ENCODE measurements at regions of chr2 and their contacts with region 1.

Region 1: DNA sequence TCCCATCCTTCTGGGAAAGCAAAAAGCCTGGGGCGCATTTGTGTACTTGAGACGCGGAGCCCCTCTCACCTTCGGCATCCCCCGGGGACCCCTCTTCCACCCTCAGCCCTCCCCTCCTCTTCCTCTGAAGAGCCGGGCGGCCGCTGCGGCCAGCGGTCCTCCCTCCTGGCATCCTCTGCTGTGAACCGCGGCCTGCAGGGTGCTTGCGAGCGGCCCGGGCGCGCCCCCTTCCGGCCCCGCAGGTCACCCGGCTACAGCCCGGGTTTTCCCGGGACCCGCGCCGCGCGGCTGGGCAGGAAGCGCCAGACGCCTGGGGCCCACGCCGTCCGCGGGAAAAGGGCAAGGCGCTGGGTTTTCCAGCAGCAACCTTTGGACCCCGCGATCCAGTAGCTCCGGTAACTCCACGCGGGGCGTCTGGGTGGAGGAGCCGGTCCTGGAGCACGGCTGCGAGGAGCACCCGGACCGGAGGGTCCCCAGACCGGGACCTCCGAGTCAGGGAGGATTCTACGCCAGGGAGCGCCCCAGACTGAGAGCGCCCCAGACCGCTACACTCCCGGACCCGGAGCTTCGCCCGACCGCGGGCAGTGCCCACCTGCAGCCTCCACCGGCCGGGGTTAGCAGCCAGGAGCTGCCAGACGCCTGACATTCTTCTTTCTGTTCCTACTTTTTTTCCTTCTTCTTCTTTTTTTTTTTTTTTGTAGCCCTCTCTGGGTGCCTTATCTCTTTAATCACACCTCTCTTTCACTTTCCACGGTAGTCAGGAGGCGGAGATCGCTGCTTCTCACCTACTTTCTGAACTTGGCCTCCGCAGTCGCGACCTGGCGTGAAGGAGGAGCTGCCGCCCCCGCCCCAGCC is at the start of gene IL18R1:
- DNase-seq: peak; percentile 81 to 88
- ATAC-seq: peak; percentile 96 to 100 (median 99)
- H3K4me3 ChIP-seq: peak within 1 kb of the TSS; percentile 84
- H3K27ac ChIP-seq: peak within 1 kb of the TSS; percentile 32
- H3K4me1 ChIP-seq: no peaks in the 10 kb centered on the region
- H3K27me3 ChIP-seq: no peaks in the 10 kb centered on the region
- CTCF ChIP-seq: peak; percentile 84
- total RNA-seq, gene IL18R1: 0.80 to 2.1 (median 0.97) TPM

Region 2: DNA sequence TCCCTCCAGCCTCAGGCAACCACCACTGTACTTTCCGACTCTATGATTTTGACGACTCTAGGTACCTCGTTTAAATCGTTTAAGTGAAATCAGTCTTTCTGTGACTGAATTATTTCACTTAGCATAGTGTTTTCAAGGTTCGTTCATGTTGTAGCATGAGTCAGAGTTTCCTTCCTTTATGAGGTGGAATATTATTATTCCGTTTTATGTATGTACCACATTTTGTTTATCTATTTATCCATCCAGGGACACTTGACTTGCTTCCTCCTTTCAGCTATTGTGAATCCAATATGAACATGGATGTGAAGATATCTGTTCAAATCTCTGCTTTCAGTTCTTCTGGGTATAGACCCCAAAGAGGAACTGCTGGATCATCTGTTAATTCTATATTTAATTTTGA is 344.9 kb before region 1 on chr2:
- intact Hi-C with region 1: loop called in 1 of 2 experiments (anchors 10 kb)
- DNase-seq: no peak
- ATAC-seq: no peak
- H3K4me3 ChIP-seq: no peak overlapping the region
- H3K27ac ChIP-seq: no peak overlapping the region
- H3K4me1 ChIP-seq: no peaks in the 10 kb centered on the region
- H3K27me3 ChIP-seq: no peaks in the 10 kb centered on the region
- CTCF ChIP-seq: no peak

Region 3: DNA sequence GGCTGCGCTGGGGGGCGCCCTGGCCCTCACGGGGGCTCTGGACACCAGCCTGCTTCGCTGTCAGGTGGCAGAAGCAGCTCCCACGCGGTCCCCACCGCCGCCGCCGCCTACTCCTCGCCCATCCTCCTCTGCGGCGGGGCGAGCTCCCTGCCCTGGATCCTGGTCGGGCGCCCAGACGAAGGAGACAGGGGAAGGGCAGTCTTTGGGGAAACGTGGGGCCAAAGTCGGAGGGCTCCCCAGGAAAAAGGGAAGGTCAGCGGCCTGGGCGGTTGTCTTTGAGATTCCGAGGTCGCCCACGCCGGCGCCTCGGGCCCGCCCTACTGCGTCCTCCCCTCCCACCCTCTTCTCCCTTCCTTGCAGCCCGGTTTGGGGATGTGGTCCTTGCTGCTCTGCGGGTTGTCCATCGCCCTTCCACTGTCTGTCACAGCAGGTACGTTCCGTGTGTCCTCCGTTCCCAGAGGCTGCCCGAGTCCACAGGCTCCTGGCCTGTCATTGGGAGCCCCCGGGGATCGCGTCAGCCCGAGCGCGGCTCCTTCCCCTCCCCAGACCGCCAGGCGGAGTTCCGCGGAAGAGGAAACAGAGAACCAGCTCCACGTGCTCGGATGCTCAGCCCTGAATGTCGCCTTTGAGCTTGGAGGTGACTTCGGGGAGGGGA is 168.1 kb before region 1 on chr2:
- intact Hi-C with region 1: loop called (anchors 5 to 10 kb)
- DNase-seq: peak; percentile 70 to 81
- ATAC-seq: peak; percentile 81 to 93 (median 86)
- H3K4me3 ChIP-seq: peak overlapping the region; percentile 75
- H3K27ac ChIP-seq: peak overlapping the region; percentile 55
- H3K4me1 ChIP-seq: no peaks in the 10 kb centered on the region
- H3K27me3 ChIP-seq: no peaks in the 10 kb centered on the region
- CTCF ChIP-seq: peak; percentile 37

Region 4: DNA sequence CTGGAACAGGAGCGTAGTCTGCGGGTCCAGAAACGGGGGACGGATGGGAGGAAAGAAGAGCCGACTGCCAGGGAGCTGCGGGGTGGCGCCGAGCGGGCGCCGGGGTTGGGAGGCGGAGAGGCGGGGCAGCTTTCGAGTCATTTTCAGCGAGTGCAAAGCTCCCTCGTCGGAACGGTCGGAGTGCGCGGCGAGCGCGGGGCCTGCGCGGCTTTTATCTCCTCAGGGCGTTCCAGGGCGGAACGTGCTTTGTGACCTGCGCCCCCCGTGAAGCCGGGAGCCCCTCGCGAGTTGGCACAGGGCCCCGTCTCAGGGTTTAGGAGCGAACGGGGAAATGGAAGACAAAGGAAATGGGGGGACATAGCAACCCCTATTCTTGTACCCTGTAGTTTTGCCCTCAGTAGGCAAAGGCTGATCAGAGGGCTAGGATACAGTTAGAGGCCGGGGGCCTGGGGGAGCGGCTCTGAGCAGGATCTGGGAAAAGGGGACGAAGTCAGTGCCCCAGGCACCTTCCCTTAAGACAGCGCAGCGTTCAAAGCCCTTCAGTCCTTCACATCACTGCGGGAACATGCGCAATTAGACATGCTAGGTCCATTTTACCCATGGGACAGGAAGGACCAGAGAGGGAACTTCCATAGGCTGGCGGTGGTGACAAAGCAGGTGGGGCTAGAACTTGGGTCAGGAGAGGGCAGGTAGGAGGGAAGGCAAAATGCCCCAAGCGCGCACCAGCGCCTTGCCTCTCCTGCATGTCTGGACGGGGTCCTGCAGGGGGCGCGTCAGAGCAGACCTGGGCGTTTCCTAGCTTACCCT is 104.5 kb before region 1 on chr2:
- intact Hi-C with region 1: loop called (anchors 2 to 5 kb)
- DNase-seq: peak; percentile 70 to 80
- ATAC-seq: peak; percentile 73 to 87 (median 77)
- H3K4me3 ChIP-seq: peak overlapping the region; percentile 55
- H3K27ac ChIP-seq: no peak overlapping the region
- H3K4me1 ChIP-seq: no peaks in the 10 kb centered on the region
- H3K27me3 ChIP-seq: no peaks in the 10 kb centered on the region
- CTCF ChIP-seq: peak; percentile 62

Region 5: DNA sequence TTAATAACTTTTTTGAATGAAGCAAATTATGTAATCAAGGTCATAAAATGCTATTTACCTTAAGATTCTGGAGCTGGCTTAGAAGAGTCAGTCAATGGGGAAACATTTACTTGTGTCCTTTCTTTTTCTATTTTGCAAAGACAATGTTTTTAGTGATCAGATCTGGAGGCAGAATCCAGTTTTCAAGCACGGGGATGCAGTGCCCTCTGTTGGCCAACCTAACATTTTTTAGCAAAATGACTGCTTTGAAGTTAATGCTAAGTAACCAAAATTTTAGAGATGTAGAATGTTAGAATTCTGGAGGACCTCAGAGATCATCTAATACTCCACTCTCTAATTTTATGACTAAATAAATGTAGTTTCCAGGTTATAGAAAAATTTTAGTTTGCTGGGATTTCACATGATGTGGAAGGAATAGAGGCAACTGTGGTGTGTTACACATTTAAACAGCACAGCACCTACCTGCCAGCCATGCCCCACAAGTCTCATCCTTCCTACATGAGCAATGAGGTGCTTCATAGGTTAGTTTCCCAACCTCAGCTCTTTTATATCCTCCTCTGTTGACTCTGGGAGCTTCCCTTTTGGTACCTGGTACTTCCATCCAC is 93.7 kb after region 1 on chr2:
- intact Hi-C with region 1: loop called in 1 of 2 experiments (anchors 5 kb)
- DNase-seq: peak in 1 of 2 donors; percentile 19
- ATAC-seq: no peak
- H3K4me3 ChIP-seq: no peak overlapping the region
- H3K27ac ChIP-seq: no peak overlapping the region
- H3K4me1 ChIP-seq: no peaks in the 10 kb centered on the region
- H3K27me3 ChIP-seq: peaks cover 0 to 2% (median 0%) of the 10 kb centered on the region in 3 donors
- CTCF ChIP-seq: peak; percentile 49